ENCODE measurements at regions of chr5 and their contacts with region 1.

Region 1: GRCh38 chr5:160390787-160391696 is 8.8 kb downstream of the FAM200C start:
- DNase-seq: no peak
- H3K4me3 Mint-ChIP-seq: no peak overlapping the region
- H3K27ac Mint-ChIP-seq: no peak overlapping the region
- H3K4me1 Mint-ChIP-seq: no peaks in the 10 kb centered on the region
- H3K27me3 Mint-ChIP-seq: no peaks in the 10 kb centered on the region

Region 2: GRCh38 chr5:160021831-160022446 is 369.1 kb before region 1 on chr5:
- CTCF ChIA-PET with region 1: interaction called, 23 read pairs
- POLR2A ChIA-PET with region 1: no interaction called
- DNase-seq: peak; percentile 53
- H3K4me3 Mint-ChIP-seq: no peak overlapping the region
- H3K27ac Mint-ChIP-seq: no peak overlapping the region
- H3K4me1 Mint-ChIP-seq: peaks cover 16% of the 10 kb centered on the region
- H3K27me3 Mint-ChIP-seq: no peaks in the 10 kb centered on the region

Region 3: GRCh38 chr5:160342403-160342941 is 48.6 kb before region 1 on chr5:
- CTCF ChIA-PET with region 1: interaction called, 14 read pairs
- POLR2A ChIA-PET with region 1: no interaction called
- DNase-seq: no peak
- H3K4me3 Mint-ChIP-seq: no peak overlapping the region
- H3K27ac Mint-ChIP-seq: no peak overlapping the region
- H3K4me1 Mint-ChIP-seq: peaks cover 11% of the 10 kb centered on the region
- H3K27me3 Mint-ChIP-seq: peaks cover 2% of the 10 kb centered on the region

Region 4: GRCh38 chr5:160379511-160379910 is 11.5 kb before region 1 on chr5:
- CTCF ChIA-PET with region 1: interaction called, 11 read pairs
- POLR2A ChIA-PET with region 1: no interaction called
- DNase-seq: no peak
- H3K4me3 Mint-ChIP-seq: no peak overlapping the region
- H3K27ac Mint-ChIP-seq: no peak overlapping the region
- H3K4me1 Mint-ChIP-seq: no peaks in the 10 kb centered on the region
- H3K27me3 Mint-ChIP-seq: peaks cover 39% of the 10 kb centered on the region

Region 5: GRCh38 chr5:160432196-160432595 is 41.2 kb after region 1 on chr5:
- CTCF ChIA-PET with region 1: no interaction called
- POLR2A ChIA-PET with region 1: no interaction called
- DNase-seq: no peak
- H3K4me3 Mint-ChIP-seq: no peak overlapping the region
- H3K27ac Mint-ChIP-seq: no peak overlapping the region
- H3K4me1 Mint-ChIP-seq: peaks cover 14% of the 10 kb centered on the region
- H3K27me3 Mint-ChIP-seq: peaks cover 10% of the 10 kb centered on the region